ENCODE measurements at regions of chr5 and their contacts with region 1.

Region 1: DNA sequence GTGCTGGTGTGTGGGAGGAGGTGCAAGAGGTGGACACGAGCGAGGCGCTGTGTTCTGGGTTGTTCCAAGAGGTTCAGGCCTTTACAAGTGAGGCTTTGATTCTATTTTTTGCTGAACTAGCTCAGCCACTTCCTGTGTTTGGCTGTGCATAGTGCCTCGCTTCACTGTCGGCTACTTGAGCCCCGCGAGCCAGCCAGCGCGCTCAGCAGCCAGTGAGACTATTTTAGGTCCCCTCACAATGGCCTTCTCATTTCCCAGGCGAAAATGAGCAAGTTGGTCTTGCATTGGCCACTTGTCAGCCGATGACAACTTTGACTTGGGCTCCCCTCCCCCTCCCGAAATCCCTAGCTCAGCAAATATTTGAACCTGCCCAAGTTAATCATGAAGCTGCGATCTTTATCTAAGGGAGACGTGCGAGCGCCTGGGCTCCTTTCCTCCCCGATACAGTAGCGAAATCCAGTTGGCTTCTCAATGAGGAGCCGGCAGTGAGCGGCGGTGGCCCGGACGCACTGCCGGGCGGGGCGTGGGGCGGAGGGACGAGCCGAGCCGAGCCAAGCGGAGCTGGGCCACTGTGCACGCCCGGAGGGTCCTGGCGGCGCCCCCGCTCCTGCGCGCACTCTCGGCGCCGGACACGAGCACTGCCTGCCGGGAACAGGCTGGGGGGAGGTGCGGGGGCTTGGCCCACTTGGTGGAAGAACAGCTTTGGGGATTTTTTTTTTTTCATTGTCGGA is 72.6 kb downstream of the PIK3R1 start:
- DNase-seq: peak; percentile 52 to 70 (median 62)
- H3K4me3 ChIP-seq: peak overlapping the region; percentile 55 to 64
- H3K4me3 Mint-ChIP-seq: peak overlapping the region; percentile 70 to 94 (median 91)
- H3K27ac ChIP-seq: peak overlapping the region; percentile 52
- H3K27ac Mint-ChIP-seq: peak overlapping the region; percentile 89 to 96 (median 94)
- H3K4me1 ChIP-seq: peaks cover 89% of the 10 kb centered on the region
- H3K4me1 Mint-ChIP-seq: peaks cover 75 to 94% (median 85%) of the 10 kb centered on the region in 4 donors
- H3K27me3 ChIP-seq: no peaks in the 10 kb centered on the region
- H3K27me3 Mint-ChIP-seq: no peaks in the 10 kb centered on the region

Region 2: DNA sequence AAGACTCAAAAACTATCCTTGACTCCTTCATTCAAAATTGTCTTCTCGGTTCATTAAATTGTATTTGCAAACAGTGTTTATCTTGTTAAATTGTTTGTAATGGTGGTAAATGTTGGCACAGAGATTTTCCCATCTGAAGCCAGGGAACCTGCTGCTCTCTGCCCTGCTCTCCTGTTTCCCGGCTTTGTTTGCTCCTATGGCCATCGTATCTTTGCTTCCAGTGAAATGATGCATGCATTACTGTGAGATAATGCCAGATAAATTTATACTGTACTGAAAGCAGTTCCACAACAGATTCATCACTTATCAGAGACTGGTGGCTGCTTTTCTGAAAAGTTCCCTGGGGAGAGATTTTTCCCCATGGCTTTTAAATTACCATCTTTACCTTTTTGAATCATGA is 1172.9 kb before region 1 on chr5:
- CTCF ChIA-PET with region 1: no interaction called
- POLR2A ChIA-PET with region 1: no interaction called
- intact Hi-C with region 1: no loop called
- DNase-seq: no peak
- H3K4me3 ChIP-seq: no peak overlapping the region
- H3K4me3 Mint-ChIP-seq: no peak overlapping the region
- H3K27ac ChIP-seq: no peak overlapping the region
- H3K27ac Mint-ChIP-seq: no peak overlapping the region
- H3K4me1 ChIP-seq: no peaks in the 10 kb centered on the region
- H3K4me1 Mint-ChIP-seq: no peaks in the 10 kb centered on the region
- H3K27me3 ChIP-seq: no peaks in the 10 kb centered on the region
- H3K27me3 Mint-ChIP-seq: no peaks in the 10 kb centered on the region

Region 3: GRCh38 chr5:68110264-68110663 is 177.9 kb before region 1 on chr5:
- CTCF ChIA-PET with region 1: no interaction called
- POLR2A ChIA-PET with region 1: no interaction called
- intact Hi-C with region 1: no loop called
- DNase-seq: no peak
- H3K4me3 ChIP-seq: no peak overlapping the region
- H3K4me3 Mint-ChIP-seq: no peak overlapping the region
- H3K27ac ChIP-seq: no peak overlapping the region
- H3K27ac Mint-ChIP-seq: no peak overlapping the region
- H3K4me1 ChIP-seq: no peaks in the 10 kb centered on the region
- H3K4me1 Mint-ChIP-seq: peaks cover 0 to 2% (median 0%) of the 10 kb centered on the region in 4 donors
- H3K27me3 ChIP-seq: no peaks in the 10 kb centered on the region
- H3K27me3 Mint-ChIP-seq: peaks cover 5 to 13% of the 10 kb centered on the region in 2 donors

Region 4: GRCh38 chr5:68178579-68178978 is 109.6 kb before region 1 on chr5:
- CTCF ChIA-PET with region 1: no interaction called
- POLR2A ChIA-PET with region 1: no interaction called
- intact Hi-C with region 1: no loop called
- DNase-seq: no peak
- H3K4me3 ChIP-seq: no peak overlapping the region
- H3K4me3 Mint-ChIP-seq: no peak overlapping the region
- H3K27ac ChIP-seq: no peak overlapping the region
- H3K27ac Mint-ChIP-seq: no peak overlapping the region
- H3K4me1 ChIP-seq: no peaks in the 10 kb centered on the region
- H3K4me1 Mint-ChIP-seq: peaks cover 0 to 2% (median 0%) of the 10 kb centered on the region in 4 donors
- H3K27me3 ChIP-seq: no peaks in the 10 kb centered on the region
- H3K27me3 Mint-ChIP-seq: no peaks in the 10 kb centered on the region

Region 5: GRCh38 chr5:68196876-68197275 is 91.3 kb before region 1 on chr5:
- CTCF ChIA-PET with region 1: no interaction called
- POLR2A ChIA-PET with region 1: no interaction called
- intact Hi-C with region 1: no loop called
- DNase-seq: no peak
- H3K4me3 ChIP-seq: no peak overlapping the region
- H3K4me3 Mint-ChIP-seq: no peak overlapping the region
- H3K27ac ChIP-seq: no peak overlapping the region
- H3K27ac Mint-ChIP-seq: peak overlapping the region in 1 of 7 donors; percentile 56
- H3K4me1 ChIP-seq: no peaks in the 10 kb centered on the region
- H3K4me1 Mint-ChIP-seq: peaks cover 0 to 13% (median 10%) of the 10 kb centered on the region in 4 donors
- H3K27me3 ChIP-seq: no peaks in the 10 kb centered on the region
- H3K27me3 Mint-ChIP-seq: peaks cover 0 to 2% of the 10 kb centered on the region in 2 donors

Region 6: GRCh38 chr5:68215208-68215897 is 72.8 kb before region 1 on chr5 and contains the start of gene PIK3R1:
- CTCF ChIA-PET with region 1: interaction called, 13 read pairs
- POLR2A ChIA-PET with region 1: interaction called, 69 read pairs
- intact Hi-C with region 1: no loop called
- DNase-seq: peak; percentile 91 to 94 (median 92)
- H3K4me3 ChIP-seq: peak within 1 kb of the TSS; percentile 85 to 89
- H3K4me3 Mint-ChIP-seq: peak within 1 kb of the TSS; percentile 91 to 97 (median 94)
- H3K27ac ChIP-seq: peak within 1 kb of the TSS; percentile 80
- H3K27ac Mint-ChIP-seq: peak within 1 kb of the TSS; percentile 93 to 96 (median 95)
- H3K4me1 ChIP-seq: peaks cover 43% of the 10 kb centered on the region
- H3K4me1 Mint-ChIP-seq: peaks cover 37 to 51% (median 46%) of the 10 kb centered on the region in 4 donors
- H3K27me3 ChIP-seq: no peaks in the 10 kb centered on the region
- H3K27me3 Mint-ChIP-seq: no peaks in the 10 kb centered on the region
- total RNA-seq, gene PIK3R1: 151 to 152 TPM

Region 7: GRCh38 chr5:68303038-68303738 is 15.0 kb after region 1 on chr5:
- CTCF ChIA-PET with region 1: interaction called, 30 read pairs
- POLR2A ChIA-PET with region 1: interaction called, 21 read pairs
- intact Hi-C with region 1: no loop called
- DNase-seq: no peak
- H3K4me3 ChIP-seq: no peak overlapping the region
- H3K4me3 Mint-ChIP-seq: no peak overlapping the region
- H3K27ac ChIP-seq: no peak overlapping the region
- H3K27ac Mint-ChIP-seq: peak overlapping the region in 5 of 7 donors; percentile 43 to 74 (median 66)
- H3K4me1 ChIP-seq: peaks cover 6% of the 10 kb centered on the region
- H3K4me1 Mint-ChIP-seq: peaks cover 14 to 36% (median 19%) of the 10 kb centered on the region in 4 donors
- H3K27me3 ChIP-seq: no peaks in the 10 kb centered on the region
- H3K27me3 Mint-ChIP-seq: no peaks in the 10 kb centered on the region

Region 8: GRCh38 chr5:68378204-68378824 is 90.2 kb after region 1 on chr5:
- CTCF ChIA-PET with region 1: interaction called, 13 read pairs
- POLR2A ChIA-PET with region 1: interaction called, 5 read pairs
- intact Hi-C with region 1: no loop called
- DNase-seq: peak in 3 of 5 donors; percentile 10 to 16 (median 15)
- H3K4me3 ChIP-seq: no peak overlapping the region
- H3K4me3 Mint-ChIP-seq: peak overlapping the region in 6 of 8 donors; percentile 27 to 71 (median 60)
- H3K27ac ChIP-seq: no peak overlapping the region
- H3K27ac Mint-ChIP-seq: peak overlapping the region; percentile 31 to 82 (median 69)
- H3K4me1 ChIP-seq: peaks cover 55% of the 10 kb centered on the region
- H3K4me1 Mint-ChIP-seq: peaks cover 33 to 63% (median 52%) of the 10 kb centered on the region in 4 donors
- H3K27me3 ChIP-seq: no peaks in the 10 kb centered on the region
- H3K27me3 Mint-ChIP-seq: no peaks in the 10 kb centered on the region

Region 9: DNA sequence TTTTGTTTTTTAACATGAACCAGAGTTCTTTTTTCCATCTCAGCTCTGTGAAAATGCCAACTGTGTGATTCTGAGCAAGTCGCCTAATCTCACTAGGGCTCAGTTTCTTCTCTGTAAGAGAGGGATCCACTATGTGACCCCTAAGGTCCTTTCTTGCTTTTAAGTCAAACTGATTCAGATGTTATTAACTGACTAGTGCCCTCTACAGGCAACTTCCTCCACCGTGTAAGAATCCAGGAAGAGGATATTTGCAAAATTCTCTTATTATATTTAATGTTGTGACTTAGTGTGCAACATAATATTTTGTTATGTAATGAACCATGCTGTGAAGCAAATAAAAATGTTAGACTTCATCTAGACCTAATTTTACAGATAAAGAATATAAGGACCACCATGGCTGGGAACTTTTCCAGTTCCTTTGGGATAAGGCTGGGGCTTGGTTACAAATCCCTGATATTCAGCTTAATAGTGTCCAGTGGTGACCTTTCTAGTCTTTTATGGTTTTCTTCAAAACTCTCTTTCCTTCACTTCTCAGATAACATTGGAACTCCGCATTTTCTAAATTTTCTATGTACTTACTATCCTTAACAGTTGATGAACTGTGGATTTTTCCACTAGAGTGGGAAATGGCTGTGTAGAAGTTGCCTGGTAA is 172.1 kb after region 1 on chr5:
- CTCF ChIA-PET with region 1: interaction called, 96 read pairs
- POLR2A ChIA-PET with region 1: interaction called, 24 read pairs
- intact Hi-C with region 1: loop called (anchors 1 kb)
- DNase-seq: peak; percentile 49 to 59 (median 52)
- H3K4me3 ChIP-seq: no peak overlapping the region
- H3K4me3 Mint-ChIP-seq: no peak overlapping the region
- H3K27ac ChIP-seq: no peak overlapping the region
- H3K27ac Mint-ChIP-seq: peak overlapping the region in 1 of 7 donors; percentile 17
- H3K4me1 ChIP-seq: peaks cover 27% of the 10 kb centered on the region
- H3K4me1 Mint-ChIP-seq: peaks cover 11 to 21% (median 12%) of the 10 kb centered on the region in 4 donors
- H3K27me3 ChIP-seq: no peaks in the 10 kb centered on the region
- H3K27me3 Mint-ChIP-seq: no peaks in the 10 kb centered on the region

Region 10: GRCh38 chr5:69007726-69008368 is 719.7 kb after region 1 on chr5:
- CTCF ChIA-PET with region 1: interaction called, 3 read pairs
- POLR2A ChIA-PET with region 1: no interaction called
- intact Hi-C with region 1: loop called (anchors 1 kb)
- DNase-seq: peak; percentile 49 to 57 (median 54)
- H3K4me3 ChIP-seq: no peak overlapping the region
- H3K4me3 Mint-ChIP-seq: no peak overlapping the region
- H3K27ac ChIP-seq: no peak overlapping the region
- H3K27ac Mint-ChIP-seq: no peak overlapping the region
- H3K4me1 ChIP-seq: no peaks in the 10 kb centered on the region
- H3K4me1 Mint-ChIP-seq: no peaks in the 10 kb centered on the region
- H3K27me3 ChIP-seq: no peaks in the 10 kb centered on the region
- H3K27me3 Mint-ChIP-seq: peaks cover 15 to 18% of the 10 kb centered on the region in 2 donors